Common myeloid progenitor, CD34-positive (primary cell): ENCODE measurements at regions of chr10 and their contacts with region 1.

Region 1: DNA sequence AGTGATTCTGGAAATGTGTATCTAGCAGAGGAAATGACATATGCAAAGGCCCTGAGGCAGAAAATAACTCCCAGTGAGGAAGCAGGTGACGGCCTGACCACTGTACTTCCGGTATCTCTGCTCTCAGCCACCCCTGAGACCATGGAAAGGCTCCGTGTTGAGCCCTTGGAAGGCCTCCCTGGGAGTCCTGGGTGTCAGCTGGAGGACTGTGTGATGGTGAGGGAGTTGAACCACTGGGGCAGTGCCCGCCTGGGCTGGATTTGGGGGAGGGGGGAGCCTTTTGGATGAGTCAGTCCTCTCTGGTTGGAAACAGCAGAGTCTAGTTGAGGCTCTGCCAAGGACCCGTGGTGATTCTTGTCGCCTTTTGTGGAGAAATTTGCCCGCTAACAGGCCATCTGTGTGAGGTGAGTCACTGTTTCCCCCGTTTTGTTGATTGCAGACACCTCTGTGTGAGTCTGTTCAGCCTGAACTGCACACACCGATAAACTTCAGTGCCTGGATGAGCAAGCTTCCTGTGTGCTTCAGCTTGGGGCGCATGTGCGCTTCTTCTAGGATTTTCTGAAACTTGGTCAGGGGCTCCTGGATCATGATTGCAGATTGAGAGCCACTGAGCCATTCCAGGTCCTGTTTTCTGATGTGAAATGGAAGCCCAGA is 98.6 kb downstream of the GRK5 start:
- DNase-seq: peak; percentile 94 to 100 (median 99)
- H3K4me3 ChIP-seq: peak overlapping the region in 5 of 7 experiments; percentile 2 to 62 (median 30)
- H3K27ac ChIP-seq: peak overlapping the region; percentile 59 to 87
- H3K4me1 ChIP-seq: peaks cover 2 to 50% (median 43%) of the 10 kb centered on the region in 4 experiments
- H3K27me3 ChIP-seq: peaks cover 0 to 67% (median 28%) of the 10 kb centered on the region in 5 experiments

Region 2: GRCh38 chr10:119237722-119238436 is 68.1 kb before region 1 on chr10:
- CTCF ChIA-PET with region 1: no interaction called
- POLR2A ChIA-PET with region 1: no interaction called
- DNase-seq: no peak
- H3K4me3 ChIP-seq: no peak overlapping the region
- H3K27ac ChIP-seq: no peak overlapping the region
- H3K4me1 ChIP-seq: peaks cover 0 to 7% (median 3%) of the 10 kb centered on the region in 4 experiments
- H3K27me3 ChIP-seq: peaks cover 0 to 2% (median 0%) of the 10 kb centered on the region in 5 experiments

Region 3: DNA sequence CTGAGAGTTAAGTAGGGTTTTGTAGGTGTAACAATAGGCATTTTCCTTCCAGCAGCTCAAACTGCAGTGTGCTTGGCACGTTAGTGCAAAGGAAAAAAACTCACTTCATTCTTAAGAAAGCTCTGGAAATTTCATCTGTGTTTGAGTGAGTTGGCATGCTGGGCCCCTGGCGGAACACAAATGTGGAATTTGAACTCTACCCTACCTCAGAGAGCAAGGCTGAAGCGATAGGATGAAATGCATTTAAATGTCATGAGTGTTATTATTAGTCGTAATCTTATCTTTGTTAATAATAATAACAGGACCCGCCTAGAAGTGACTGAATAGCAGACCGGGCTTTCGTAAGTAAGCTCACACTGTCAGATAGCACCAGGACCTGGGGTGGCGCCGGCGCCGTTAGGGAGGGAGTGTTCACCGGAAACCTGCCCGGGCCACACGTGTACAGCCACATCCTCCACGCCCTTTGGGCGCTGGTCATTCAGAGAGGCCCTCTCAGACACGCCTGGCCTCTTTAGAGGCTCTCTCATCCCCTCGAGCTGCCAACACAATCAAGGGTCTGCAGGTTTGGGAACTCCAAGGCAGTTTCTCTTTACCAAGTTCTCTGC is 35.1 kb before region 1 on chr10:
- CTCF ChIA-PET with region 1: interaction called, 8 read pairs
- POLR2A ChIA-PET with region 1: interaction called, 15 read pairs
- DNase-seq: peak in 1 of 3 donors; percentile 92
- H3K4me3 ChIP-seq: peak overlapping the region in 6 of 7 experiments; percentile 33 to 70 (median 45)
- H3K27ac ChIP-seq: no peak overlapping the region
- H3K4me1 ChIP-seq: peaks cover 10 to 38% (median 31%) of the 10 kb centered on the region in 4 experiments
- H3K27me3 ChIP-seq: no peaks in the 10 kb centered on the region